Caco-2 (cell line): ENCODE measurements at regions of chr16 and their contacts with region 1.

Region 1: GRCh38 chr16:85395190-85395912 is 217.8 kb upstream of the GSE1 start:
- DNase-seq: peak in 1 of 2 experiments; percentile 25
- H3K4me3 ChIP-seq: no peak overlapping the region
- H3K4me3 Mint-ChIP-seq: no peak overlapping the region
- H3K27ac Mint-ChIP-seq: no peak overlapping the region
- H3K4me1 ChIP-seq: peaks cover 12% of the 10 kb centered on the region
- H3K4me1 Mint-ChIP-seq: peaks cover 7% of the 10 kb centered on the region
- H3K27me3 ChIP-seq: no peaks in the 10 kb centered on the region
- H3K27me3 Mint-ChIP-seq: no peaks in the 10 kb centered on the region
- CTCF ChIP-seq: no peak

Region 2: DNA sequence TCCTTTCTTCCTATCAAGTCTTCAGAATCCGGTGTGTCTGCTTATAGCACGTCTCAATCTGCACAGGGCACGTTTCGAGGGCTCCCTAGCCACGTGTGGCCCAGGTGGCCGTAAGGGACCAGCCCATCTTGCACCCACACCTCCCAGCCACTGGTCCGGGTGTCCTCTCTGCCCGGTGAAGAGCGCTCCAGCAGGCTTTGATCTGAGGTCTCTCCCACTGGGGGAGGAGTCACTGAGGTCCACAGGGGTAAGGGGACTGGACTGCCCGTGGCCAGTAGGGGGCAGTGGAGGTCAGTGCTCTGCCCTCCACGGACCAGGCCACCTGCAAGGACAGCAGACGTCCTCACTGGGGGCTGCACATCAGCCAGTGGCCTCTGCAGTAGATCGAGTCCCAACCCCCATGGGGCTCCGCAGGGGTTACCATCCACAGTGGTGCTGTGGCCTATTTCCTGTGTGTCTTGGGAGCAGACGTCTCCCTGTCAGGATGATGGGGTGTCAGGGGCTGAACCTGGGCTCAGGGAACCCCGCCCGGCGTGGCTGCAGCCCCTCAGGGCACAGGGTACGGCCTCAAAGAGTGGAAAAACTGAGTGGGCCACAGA is 78.9 kb before region 1 on chr16:
- CTCF ChIA-PET with region 1: interaction called, 4 read pairs
- POLR2A ChIA-PET with region 1: interaction called, 3 read pairs
- intact Hi-C with region 1: loop called (anchors 5 kb)
- DNase-seq: peak; percentile 77 to 87
- H3K4me3 ChIP-seq: no peak overlapping the region
- H3K4me3 Mint-ChIP-seq: no peak overlapping the region
- H3K27ac Mint-ChIP-seq: peak overlapping the region; percentile 34
- H3K4me1 ChIP-seq: no peaks in the 10 kb centered on the region
- H3K4me1 Mint-ChIP-seq: peaks cover 12% of the 10 kb centered on the region
- H3K27me3 ChIP-seq: no peaks in the 10 kb centered on the region
- H3K27me3 Mint-ChIP-seq: no peaks in the 10 kb centered on the region
- CTCF ChIP-seq: peak; percentile 93 to 95

Region 3: GRCh38 chr16:85347213-85347591 is 48.1 kb before region 1 on chr16:
- CTCF ChIA-PET with region 1: interaction called, 10 read pairs
- POLR2A ChIA-PET with region 1: no interaction called
- intact Hi-C with region 1: no loop called
- DNase-seq: no peak
- H3K4me3 ChIP-seq: no peak overlapping the region
- H3K4me3 Mint-ChIP-seq: no peak overlapping the region
- H3K27ac Mint-ChIP-seq: no peak overlapping the region
- H3K4me1 ChIP-seq: peaks cover 2% of the 10 kb centered on the region
- H3K4me1 Mint-ChIP-seq: no peaks in the 10 kb centered on the region
- H3K27me3 ChIP-seq: no peaks in the 10 kb centered on the region
- H3K27me3 Mint-ChIP-seq: no peaks in the 10 kb centered on the region
- CTCF ChIP-seq: peak; percentile 38 to 40

Region 4: GRCh38 chr16:85369741-85370528 is 25.4 kb before region 1 on chr16:
- CTCF ChIA-PET with region 1: interaction called, 3 read pairs
- POLR2A ChIA-PET with region 1: no interaction called
- intact Hi-C with region 1: loop called (anchors 2 kb)
- DNase-seq: peak; percentile 66 to 83
- H3K4me3 ChIP-seq: no peak overlapping the region
- H3K4me3 Mint-ChIP-seq: no peak overlapping the region
- H3K27ac Mint-ChIP-seq: no peak overlapping the region
- H3K4me1 ChIP-seq: peaks cover 13% of the 10 kb centered on the region
- H3K4me1 Mint-ChIP-seq: no peaks in the 10 kb centered on the region
- H3K27me3 ChIP-seq: no peaks in the 10 kb centered on the region
- H3K27me3 Mint-ChIP-seq: no peaks in the 10 kb centered on the region
- CTCF ChIP-seq: peak; percentile 91

Region 5: DNA sequence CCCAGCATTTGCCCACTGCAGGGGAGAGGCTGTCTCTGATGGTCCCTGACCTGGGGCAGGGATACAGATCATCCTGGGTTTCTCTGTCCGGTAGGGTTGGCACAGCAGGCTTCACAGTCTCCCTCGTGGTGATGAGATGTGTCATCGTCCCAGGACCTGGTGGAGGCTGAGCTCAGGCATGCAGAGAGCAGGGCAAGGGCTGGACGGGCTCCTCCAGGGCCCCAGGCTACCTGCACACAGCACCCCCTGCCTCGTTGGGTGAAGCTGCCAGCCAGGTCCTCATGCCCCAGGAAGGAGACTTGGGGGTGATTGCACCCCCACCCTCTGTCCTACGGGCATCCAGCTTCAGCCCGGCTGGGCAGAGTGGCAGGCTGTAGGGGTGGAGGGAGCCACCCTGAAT is 62.0 kb after region 1 on chr16:
- CTCF ChIA-PET with region 1: no interaction called
- POLR2A ChIA-PET with region 1: no interaction called
- intact Hi-C with region 1: no loop called
- DNase-seq: no peak
- H3K4me3 ChIP-seq: no peak overlapping the region
- H3K4me3 Mint-ChIP-seq: no peak overlapping the region
- H3K27ac Mint-ChIP-seq: no peak overlapping the region
- H3K4me1 ChIP-seq: peaks cover 24% of the 10 kb centered on the region
- H3K4me1 Mint-ChIP-seq: peaks cover 21% of the 10 kb centered on the region
- H3K27me3 ChIP-seq: no peaks in the 10 kb centered on the region
- H3K27me3 Mint-ChIP-seq: no peaks in the 10 kb centered on the region
- CTCF ChIP-seq: no peak

Region 6: DNA sequence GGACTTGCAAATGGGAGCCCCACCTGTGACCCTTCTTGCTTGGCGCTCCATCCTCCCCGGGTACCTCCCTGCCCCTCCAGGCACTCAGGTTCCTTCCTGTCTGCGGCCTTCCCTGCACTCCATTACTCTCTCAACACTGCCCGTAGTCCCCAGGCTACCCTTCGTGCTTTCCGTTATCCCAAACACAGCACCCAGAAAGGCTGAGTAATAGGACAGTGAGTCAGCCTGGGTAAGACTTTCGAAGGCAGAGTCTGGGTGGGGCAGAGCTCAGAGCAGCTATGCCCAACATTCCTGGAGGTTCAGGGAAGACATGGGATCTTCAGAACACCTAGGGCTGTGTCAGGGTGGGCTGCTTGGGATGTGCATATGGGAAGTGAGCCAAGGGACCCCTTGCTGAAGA is 372.2 kb after region 1 on chr16:
- CTCF ChIA-PET with region 1: no interaction called
- POLR2A ChIA-PET with region 1: no interaction called
- intact Hi-C with region 1: no loop called
- DNase-seq: no peak
- H3K4me3 ChIP-seq: no peak overlapping the region
- H3K4me3 Mint-ChIP-seq: no peak overlapping the region
- H3K27ac Mint-ChIP-seq: peak overlapping the region; percentile 30
- H3K4me1 ChIP-seq: no peaks in the 10 kb centered on the region
- H3K4me1 Mint-ChIP-seq: no peaks in the 10 kb centered on the region
- H3K27me3 ChIP-seq: no peaks in the 10 kb centered on the region; the same call in 1 of the 2 replicates
- H3K27me3 Mint-ChIP-seq: peaks cover 4% of the 10 kb centered on the region
- CTCF ChIP-seq: no peak